Gastrocnemius medialis (tissue), 4 donors: ENCODE measurements at regions of chr19 and their contacts with region 1.

Region 1: DNA sequence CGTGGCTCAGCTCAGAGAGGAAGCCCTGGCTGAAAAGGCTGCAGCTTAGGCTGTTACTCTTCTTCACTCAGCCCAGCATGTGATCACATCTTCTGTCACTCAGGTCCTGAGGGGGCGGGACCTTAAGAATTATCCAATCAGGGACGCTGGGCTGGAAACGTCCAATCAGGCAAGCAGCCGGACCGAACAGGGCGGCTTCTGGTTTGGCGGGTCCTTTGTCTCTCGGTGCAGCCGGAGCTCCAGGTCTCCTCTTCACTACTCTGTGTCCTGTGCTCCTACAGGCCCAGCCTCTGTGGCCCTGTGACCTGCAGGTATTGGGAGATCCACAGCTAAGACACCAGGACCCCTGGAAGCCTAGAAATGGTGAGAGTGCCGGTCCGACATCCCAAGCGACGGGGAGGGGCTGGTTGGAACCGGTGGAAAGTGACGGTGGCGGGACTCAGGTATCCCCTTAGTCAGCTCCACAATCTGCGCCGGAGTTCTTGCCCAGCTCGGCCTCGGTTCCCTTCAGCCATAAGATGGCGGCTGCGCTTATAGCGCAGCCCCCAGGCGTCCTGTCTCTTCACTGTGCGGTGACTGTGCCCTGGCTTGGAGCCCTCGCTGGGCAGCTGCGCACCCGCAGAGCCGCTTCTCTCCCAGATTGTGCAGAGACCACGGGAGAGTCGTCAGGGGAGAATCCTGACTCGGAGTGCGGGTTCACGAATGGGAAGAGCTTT is at the start of gene ZNF93:
- DNase-seq: peak; percentile 87 to 90
- ATAC-seq: peak; percentile 99
- H3K4me3 ChIP-seq: peak within 1 kb of the TSS; percentile 61 to 79 (median 72)
- H3K27ac ChIP-seq: peak within 1 kb of the TSS; percentile 74 to 82 (median 80)
- H3K4me1 ChIP-seq: no peaks in the 10 kb centered on the region
- H3K27me3 ChIP-seq: no peaks in the 10 kb centered on the region
- CTCF ChIP-seq: no peak
- POLR2A ChIP-seq: peak; percentile 41 to 76
- total RNA-seq, gene ZNF93: 0.36 to 4.1 (median 0.89) TPM

Region 2: DNA sequence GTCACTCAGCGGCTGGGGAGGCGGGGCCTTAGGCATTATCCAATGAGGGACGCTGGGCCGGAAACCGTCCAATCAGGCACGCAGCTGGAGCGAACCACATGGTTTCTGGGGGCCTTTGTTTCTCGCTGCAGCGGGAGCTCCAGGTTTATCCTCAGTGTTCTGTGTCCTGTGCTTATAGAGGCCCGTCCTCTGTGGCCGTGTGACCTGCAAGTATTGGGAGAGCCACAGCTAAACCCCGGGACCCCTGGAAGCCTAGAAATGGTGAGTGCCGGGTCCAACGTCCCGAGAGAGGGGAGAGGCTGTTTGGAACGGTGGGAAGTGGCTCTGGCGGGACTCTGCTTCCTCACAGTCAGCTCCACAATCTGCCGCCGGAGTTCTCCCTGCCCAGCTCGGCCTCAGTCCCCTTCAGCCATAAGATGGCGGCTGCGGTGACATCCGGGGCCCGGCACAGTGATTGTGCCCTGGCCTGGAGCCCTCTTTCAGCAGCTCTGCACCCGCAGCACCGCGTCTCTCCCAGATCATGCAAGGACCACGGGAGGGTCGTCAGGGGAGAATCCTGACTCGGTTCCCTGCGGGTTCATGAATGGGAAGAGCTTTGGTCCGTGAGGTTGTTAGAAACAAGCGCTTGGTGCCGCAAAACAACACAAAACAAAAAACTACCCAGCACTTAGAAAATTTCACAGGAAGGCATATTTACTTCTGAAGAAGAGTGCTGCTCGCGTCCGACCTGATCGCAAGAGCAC is 35.0 kb before region 1 on chr19 and contains the start of gene ZNF253:
- in situ Hi-C with region 1: no loop called
- intact Hi-C with region 1: loop called (anchors 2 kb)
- DNase-seq: peak; percentile 95 to 97
- ATAC-seq: peak; percentile 98 to 99
- H3K4me3 ChIP-seq: peak within 1 kb of the TSS; percentile 74 to 85 (median 80)
- H3K27ac ChIP-seq: peak within 1 kb of the TSS; percentile 93 to 96 (median 94)
- H3K4me1 ChIP-seq: peaks cover 25 to 28% of the 10 kb centered on the region in 2 donors
- H3K27me3 ChIP-seq: no peaks in the 10 kb centered on the region
- CTCF ChIP-seq: no peak
- POLR2A ChIP-seq: peak; percentile 82 to 97
- total RNA-seq, gene ZNF253: 3.1 to 9.5 (median 6.3) TPM

Region 3: GRCh38 chr19:19884583-19884982 is 16.3 kb before region 1 on chr19:
- in situ Hi-C with region 1: no loop called
- intact Hi-C with region 1: no loop called
- DNase-seq: no peak
- ATAC-seq: no peak
- H3K4me3 ChIP-seq: no peak overlapping the region
- H3K27ac ChIP-seq: no peak overlapping the region
- H3K4me1 ChIP-seq: no peaks in the 10 kb centered on the region
- H3K27me3 ChIP-seq: no peaks in the 10 kb centered on the region
- CTCF ChIP-seq: no peak
- POLR2A ChIP-seq: no peak

Region 4: GRCh38 chr19:19966862-19967261 is 66.0 kb after region 1 on chr19:
- in situ Hi-C with region 1: no loop called
- intact Hi-C with region 1: no loop called
- DNase-seq: no peak
- ATAC-seq: no peak
- H3K4me3 ChIP-seq: no peak overlapping the region
- H3K27ac ChIP-seq: no peak overlapping the region
- H3K4me1 ChIP-seq: no peaks in the 10 kb centered on the region
- H3K27me3 ChIP-seq: no peaks in the 10 kb centered on the region
- CTCF ChIP-seq: no peak
- POLR2A ChIP-seq: no peak